ENCODE measurements at regions of chr3 and their contacts with region 1.

Region 1: DNA sequence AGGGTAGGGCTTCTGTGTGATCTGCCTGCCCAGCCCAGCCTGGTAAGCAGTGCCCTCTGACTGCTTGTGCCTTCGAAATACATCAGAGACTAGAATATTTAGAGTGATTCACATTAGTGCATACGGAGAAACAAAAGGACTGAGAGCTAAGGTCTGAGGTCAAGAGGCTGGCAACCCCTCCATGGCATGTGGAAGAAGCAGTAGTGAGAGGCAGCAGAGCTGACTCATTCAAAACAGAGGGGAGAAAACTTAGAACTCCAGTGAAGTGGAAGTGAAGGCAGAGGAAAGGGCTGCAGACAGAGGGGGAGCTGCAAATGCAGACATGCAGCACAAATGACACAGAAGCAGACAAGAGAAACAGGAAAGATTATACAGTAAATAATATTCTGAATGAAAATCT is 61.6 kb downstream of the ULK4 start:
- DNase-seq: no peak
- ATAC-seq: no peak
- H3K4me3 ChIP-seq: no peak overlapping the region
- H3K27ac ChIP-seq: no peak overlapping the region
- H3K4me1 ChIP-seq: no peaks in the 10 kb centered on the region
- H3K27me3 ChIP-seq: no peaks in the 10 kb centered on the region
- CTCF ChIP-seq: no peak
- POLR2A ChIP-seq: no peak

Region 2: DNA sequence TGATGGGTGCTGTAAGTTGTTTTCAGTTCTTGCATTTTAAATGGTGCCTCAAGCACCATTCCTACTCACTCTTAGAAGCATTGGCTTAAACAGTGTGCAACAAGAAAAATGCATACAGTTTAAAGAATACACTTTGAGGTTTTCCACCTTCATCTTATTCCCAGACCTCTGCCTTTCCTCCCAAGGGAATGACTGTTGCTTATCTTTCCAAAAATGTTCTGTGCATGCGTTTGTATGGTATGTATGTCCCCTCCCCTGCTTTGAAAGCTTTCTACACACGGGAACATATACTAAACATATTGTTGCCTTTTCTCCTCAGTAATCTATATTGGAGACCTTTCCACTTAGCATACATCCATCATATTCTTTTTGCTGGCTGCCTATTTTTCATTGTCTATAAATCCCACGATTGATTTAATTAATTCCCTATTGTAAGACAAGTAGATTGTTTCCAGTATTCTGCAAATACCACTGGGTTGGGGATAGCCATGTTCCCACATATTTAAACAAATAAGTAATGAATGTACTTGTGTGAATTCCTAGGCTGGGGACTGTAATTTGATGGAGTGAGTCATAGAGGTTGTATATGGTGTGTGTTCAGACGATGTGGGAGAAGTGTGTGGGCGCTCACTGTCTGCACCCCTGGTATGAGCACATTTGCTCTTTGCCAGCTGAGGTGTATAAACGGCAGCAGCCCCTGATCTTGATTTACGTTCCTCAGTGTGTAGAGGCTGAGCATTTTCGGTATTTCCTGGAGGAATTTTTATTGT is 196.7 kb after region 1 on chr3:
- intact Hi-C with region 1: loop called (anchors 5 kb)
- DNase-seq: peak in 1 of 4 donors; percentile 2
- ATAC-seq: no peak
- H3K4me3 ChIP-seq: no peak overlapping the region
- H3K27ac ChIP-seq: no peak overlapping the region
- H3K4me1 ChIP-seq: peaks cover under 1% of the 10 kb centered on the region
- H3K27me3 ChIP-seq: no peaks in the 10 kb centered on the region
- CTCF ChIP-seq: no peak
- POLR2A ChIP-seq: no peak

Measured in body of pancreas (tissue), 4 donors.